Endothelial cell of umbilical vein (primary cell): ENCODE measurements at regions of chr6 and their contacts with region 1.

Region 1: GRCh38 chr6:163338671-163339405 is 75.7 kb upstream of the QKI start:
- DNase-seq: peak; percentile 57
- H3K4me3 ChIP-seq: no peak overlapping the region
- H3K27ac ChIP-seq: no peak overlapping the region
- H3K4me1 ChIP-seq: peaks cover 23% of the 10 kb centered on the region
- H3K27me3 ChIP-seq: no peaks in the 10 kb centered on the region
- CTCF ChIP-seq: no peak
- POLR2A ChIP-seq: no peak

Region 2: DNA sequence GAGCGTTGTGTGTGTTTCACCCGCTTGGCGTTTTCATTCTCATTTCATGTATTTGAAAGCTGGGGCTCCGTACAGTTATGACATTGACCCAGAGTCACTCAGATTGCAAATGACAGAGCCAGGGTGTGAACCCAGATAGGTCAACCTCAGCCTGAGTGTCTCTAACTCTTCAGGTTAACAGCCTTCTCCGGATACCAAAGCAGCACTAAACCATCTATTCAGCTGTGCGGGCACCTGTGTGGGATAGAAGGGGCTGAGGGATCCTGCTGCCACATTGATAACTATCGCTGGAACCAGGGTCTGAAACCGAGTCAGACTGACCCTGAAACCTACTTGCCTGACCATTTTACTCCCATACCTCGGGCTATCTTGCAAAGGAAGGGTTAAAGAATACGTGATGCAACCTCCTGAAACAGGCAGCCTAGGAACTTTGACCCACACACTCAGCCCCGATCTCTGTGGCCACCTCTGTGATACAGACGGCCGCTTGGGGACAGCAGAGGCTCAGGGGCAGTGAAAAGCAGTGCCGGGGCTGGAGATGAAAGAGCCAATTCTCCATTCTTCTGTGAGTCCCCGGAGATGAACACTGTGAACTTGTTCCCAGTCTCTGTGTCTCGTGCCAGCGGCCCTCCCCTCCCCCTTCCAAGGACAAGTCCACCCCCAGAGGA is 157.8 kb before region 1 on chr6:
- CTCF ChIA-PET with region 1: interaction called, 4 read pairs
- POLR2A ChIA-PET with region 1: no interaction called
- dilution Hi-C with region 1: no loop called
- intact Hi-C with region 1: loop called (anchors 1 kb)
- DNase-seq: peak; percentile 71
- H3K4me3 ChIP-seq: no peak overlapping the region
- H3K27ac ChIP-seq: no peak overlapping the region
- H3K4me1 ChIP-seq: no peaks in the 10 kb centered on the region
- H3K27me3 ChIP-seq: peaks cover 4 to 9% of the 10 kb centered on the region in 2 experiments
- CTCF ChIP-seq: peak; percentile 93 to 97
- POLR2A ChIP-seq: no peak

Region 3: GRCh38 chr6:163284151-163284550 is 54.7 kb before region 1 on chr6:
- CTCF ChIA-PET with region 1: no interaction called
- POLR2A ChIA-PET with region 1: no interaction called
- dilution Hi-C with region 1: no loop called
- intact Hi-C with region 1: loop called (anchors 2 kb)
- DNase-seq: peak; percentile 66
- H3K4me3 ChIP-seq: no peak overlapping the region
- H3K27ac ChIP-seq: peak overlapping the region; percentile 50
- H3K4me1 ChIP-seq: peaks cover 20% of the 10 kb centered on the region
- H3K27me3 ChIP-seq: no peaks in the 10 kb centered on the region
- CTCF ChIP-seq: no peak
- POLR2A ChIP-seq: peak; percentile 34

Region 4: DNA sequence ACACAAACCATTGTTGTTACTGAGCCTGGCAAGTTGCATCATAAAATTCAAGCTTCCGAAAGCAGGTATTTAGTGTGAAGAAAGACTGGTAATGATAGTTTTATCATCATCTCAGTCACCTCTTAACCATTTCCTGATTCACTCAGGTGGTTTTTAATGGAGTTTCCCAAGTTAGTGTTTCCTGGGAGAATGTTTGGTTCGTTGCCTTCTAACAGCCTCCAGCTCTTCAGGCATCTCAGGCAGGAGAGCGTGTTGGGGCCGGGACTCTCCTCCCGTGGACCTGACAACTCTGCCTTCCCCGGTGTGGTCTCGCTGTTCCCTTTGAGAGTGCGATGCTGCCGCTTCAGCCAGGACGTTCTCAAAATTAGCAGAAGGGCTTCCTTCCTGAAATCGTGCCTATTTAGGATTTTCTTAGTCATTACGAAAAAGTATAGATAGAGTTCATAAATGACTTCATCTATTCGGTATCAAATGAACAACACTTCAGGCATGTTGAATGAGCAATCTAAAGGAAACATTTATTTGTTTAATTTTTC is 29.3 kb before region 1 on chr6:
- CTCF ChIA-PET with region 1: no interaction called
- POLR2A ChIA-PET with region 1: no interaction called
- dilution Hi-C with region 1: no loop called
- intact Hi-C with region 1: loop called (anchors 1 kb)
- DNase-seq: peak; percentile 63
- H3K4me3 ChIP-seq: no peak overlapping the region
- H3K27ac ChIP-seq: peak overlapping the region; percentile 63
- H3K4me1 ChIP-seq: peaks cover 25% of the 10 kb centered on the region
- H3K27me3 ChIP-seq: no peaks in the 10 kb centered on the region
- CTCF ChIP-seq: no peak
- POLR2A ChIP-seq: no peak

Region 5: GRCh38 chr6:163355426-163355991 is 16.7 kb after region 1 on chr6:
- CTCF ChIA-PET with region 1: interaction called, 22 read pairs
- POLR2A ChIA-PET with region 1: interaction called, 3 read pairs
- dilution Hi-C with region 1: no loop called
- intact Hi-C with region 1: loop called (anchors 1 kb)
- DNase-seq: peak; percentile 93
- H3K4me3 ChIP-seq: peak overlapping the region in 2 of 3 experiments; percentile 23 to 51
- H3K27ac ChIP-seq: peak overlapping the region; percentile 97
- H3K4me1 ChIP-seq: peaks cover 36% of the 10 kb centered on the region
- H3K27me3 ChIP-seq: no peaks in the 10 kb centered on the region
- CTCF ChIP-seq: no peak
- POLR2A ChIP-seq: peak; percentile 72

Region 6: GRCh38 chr6:163387317-163387716 is 48.5 kb after region 1 on chr6:
- CTCF ChIA-PET with region 1: interaction called, 4 read pairs
- POLR2A ChIA-PET with region 1: no interaction called
- dilution Hi-C with region 1: no loop called
- intact Hi-C with region 1: loop called (anchors 1 kb)
- DNase-seq: peak; percentile 95
- H3K4me3 ChIP-seq: no peak overlapping the region
- H3K27ac ChIP-seq: peak overlapping the region; percentile 9
- H3K4me1 ChIP-seq: peaks cover 12% of the 10 kb centered on the region
- H3K27me3 ChIP-seq: no peaks in the 10 kb centered on the region
- CTCF ChIP-seq: no peak
- POLR2A ChIP-seq: peak; percentile 39

Region 7: GRCh38 chr6:163707401-163708355 is 368.8 kb after region 1 on chr6:
- CTCF ChIA-PET with region 1: no interaction called
- POLR2A ChIA-PET with region 1: no interaction called
- dilution Hi-C with region 1: no loop called
- intact Hi-C with region 1: no loop called
- DNase-seq: no peak
- H3K4me3 ChIP-seq: no peak overlapping the region
- H3K27ac ChIP-seq: no peak overlapping the region
- H3K4me1 ChIP-seq: no peaks in the 10 kb centered on the region
- H3K27me3 ChIP-seq: no peaks in the 10 kb centered on the region
- CTCF ChIP-seq: no peak
- POLR2A ChIP-seq: no peak